ENCODE measurements at regions of chr4 and their contacts with region 1.

Region 1: GRCh38 chr4:38319456-38320342 is 344.3 kb upstream of the KLF3 start:
- DNase-seq: peak; percentile 75
- ATAC-seq: peak; percentile 86
- H3K4me3 ChIP-seq: 0 out of 6 replicates have a peak overlapping the region, but pooled peaks of 1 of the 3 experiments have one; percentile 8
- H3K27ac ChIP-seq: peak overlapping the region; percentile 28
- H3K4me1 ChIP-seq: peaks cover 33% of the 10 kb centered on the region
- H3K27me3 ChIP-seq: no peaks in the 10 kb centered on the region
- CTCF ChIP-seq: peak; percentile 95
- EP300 ChIP-seq: no peak
- POLR2A ChIP-seq: no peak
- RAD21 ChIP-seq: peak; percentile 93

Region 2: GRCh38 chr4:38730830-38731646 is 411.3 kb after region 1 on chr4:
- CTCF ChIA-PET with region 1: interaction called, 9 read pairs
- POLR2A ChIA-PET with region 1: interaction called, 3 read pairs
- in situ Hi-C with region 1: no loop called
- intact Hi-C with region 1: loop called (anchors 1 kb)
- DNase-seq: peak; percentile 66
- ATAC-seq: peak; percentile 93
- H3K4me3 ChIP-seq: peak overlapping the region in 1 of 3 experiments; percentile 30; a peak in 1 of 6 replicates
- H3K27ac ChIP-seq: no peak overlapping the region
- H3K4me1 ChIP-seq: peaks cover 27% of the 10 kb centered on the region
- H3K27me3 ChIP-seq: no peaks in the 10 kb centered on the region
- CTCF ChIP-seq: peak; percentile 95
- EP300 ChIP-seq: no peak
- POLR2A ChIP-seq: no peak
- RAD21 ChIP-seq: peak; percentile 89